Panc1 (cell line): ENCODE measurements at regions of chr1 and their contacts with region 1.

Region 1: GRCh38 chr1:55974714-55975511 is 604.5 kb downstream of the PLPP3 start:
- DNase-seq: no peak
- ATAC-seq: no peak
- H3K4me3 ChIP-seq: no peak overlapping the region
- H3K27ac ChIP-seq: no peak overlapping the region
- H3K4me1 ChIP-seq: no peaks in the 10 kb centered on the region
- H3K27me3 ChIP-seq: no peaks in the 10 kb centered on the region
- CTCF ChIP-seq: no peak

Region 2: DNA sequence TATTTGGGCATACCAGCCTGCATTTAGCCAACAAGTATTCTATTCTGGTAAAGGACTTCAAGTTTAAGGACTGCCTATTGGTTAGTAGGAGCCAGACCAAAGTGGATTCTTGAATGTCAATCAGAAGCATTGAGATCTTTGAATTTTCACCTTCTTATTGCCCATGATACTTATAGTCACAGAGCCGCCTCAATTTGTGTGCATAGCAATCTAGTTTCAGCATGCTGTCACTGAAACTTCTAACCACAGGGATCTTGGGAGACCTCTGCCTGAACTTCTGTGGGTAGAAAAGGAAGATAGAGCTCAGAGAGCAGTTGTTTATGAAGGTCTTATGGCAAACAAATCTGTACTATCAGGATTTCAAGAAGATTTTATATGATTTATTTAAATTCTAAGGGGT is 258.3 kb before region 1 on chr1:
- CTCF ChIA-PET with region 1: no interaction called
- POLR2A ChIA-PET with region 1: no interaction called
- in situ Hi-C with region 1: no loop called
- intact Hi-C with region 1: no loop called
- DNase-seq: no peak
- ATAC-seq: no peak
- H3K4me3 ChIP-seq: no peak overlapping the region
- H3K27ac ChIP-seq: no peak overlapping the region
- H3K4me1 ChIP-seq: no peaks in the 10 kb centered on the region
- H3K27me3 ChIP-seq: no peaks in the 10 kb centered on the region
- CTCF ChIP-seq: no peak

Region 3: GRCh38 chr1:55768327-55768952 is 206.5 kb before region 1 on chr1:
- CTCF ChIA-PET with region 1: no interaction called
- POLR2A ChIA-PET with region 1: interaction called, 15 read pairs
- in situ Hi-C with region 1: no loop called
- intact Hi-C with region 1: no loop called
- DNase-seq: no peak
- ATAC-seq: no peak
- H3K4me3 ChIP-seq: no peak overlapping the region
- H3K27ac ChIP-seq: no peak overlapping the region
- H3K4me1 ChIP-seq: no peaks in the 10 kb centered on the region
- H3K27me3 ChIP-seq: no peaks in the 10 kb centered on the region
- CTCF ChIP-seq: no peak